A549 (cell line): ENCODE measurements at regions of chr15 and their contacts with region 1.

Region 1: DNA sequence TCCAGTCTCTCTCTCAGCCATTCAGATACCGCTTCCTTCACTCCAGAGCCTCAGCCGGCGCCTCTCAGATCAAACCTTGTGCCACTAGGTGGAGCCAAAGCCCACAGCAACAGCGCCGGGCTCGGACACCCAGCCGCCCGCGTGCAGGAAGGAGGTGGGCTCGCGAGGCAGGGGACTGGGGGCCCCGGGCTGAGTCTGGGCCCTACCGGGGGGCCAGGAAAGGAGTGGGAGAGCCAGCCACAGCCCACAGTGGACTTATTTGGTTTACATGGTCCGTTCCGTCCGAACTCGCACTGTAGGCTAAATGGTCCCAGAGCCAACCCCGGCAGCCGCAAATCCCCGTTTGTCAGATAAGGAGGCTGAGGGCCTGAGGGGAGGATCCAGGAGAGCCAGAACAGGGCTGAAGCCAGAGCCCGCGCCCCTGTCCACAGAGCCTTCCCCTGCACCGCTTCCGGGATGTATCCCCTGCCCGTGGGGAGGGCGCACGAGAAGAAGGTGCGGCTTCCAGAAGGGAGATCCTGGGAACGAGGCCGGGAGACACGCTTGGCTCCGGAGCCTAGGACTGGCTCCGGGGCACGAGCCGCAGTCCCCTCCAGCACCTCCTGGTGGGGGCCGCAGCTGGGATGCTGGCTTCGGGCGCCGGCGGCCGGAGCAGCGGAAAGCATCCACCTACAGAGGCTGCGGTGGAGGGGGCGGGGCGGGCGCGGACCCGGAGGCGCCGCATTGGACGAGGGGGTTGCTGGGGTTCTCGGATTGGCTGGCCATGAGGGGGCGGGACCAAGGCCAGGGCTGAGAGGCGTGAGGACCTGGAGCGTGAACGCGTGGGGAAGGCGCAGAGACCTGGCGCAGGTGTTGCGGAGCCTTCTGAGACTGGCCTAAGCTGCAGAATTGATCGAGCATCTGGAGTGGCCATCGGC is 6.5 kb upstream of the CYP11A1 start:
- DNase-seq: peak; percentile 81 to 96
- ATAC-seq: peak; percentile 92 to 97
- H3K4me3 ChIP-seq: peak overlapping the region; percentile 44
- H3K27ac ChIP-seq: peak overlapping the region; percentile 51 to 89
- H3K4me1 ChIP-seq: peaks cover 7% of the 10 kb centered on the region
- CTCF ChIP-seq: peak; percentile 79
- EP300 ChIP-seq: no peak
- POLR2A ChIP-seq: no peak
- RAD21 ChIP-seq: peak; percentile 86 to 89

Region 2: DNA sequence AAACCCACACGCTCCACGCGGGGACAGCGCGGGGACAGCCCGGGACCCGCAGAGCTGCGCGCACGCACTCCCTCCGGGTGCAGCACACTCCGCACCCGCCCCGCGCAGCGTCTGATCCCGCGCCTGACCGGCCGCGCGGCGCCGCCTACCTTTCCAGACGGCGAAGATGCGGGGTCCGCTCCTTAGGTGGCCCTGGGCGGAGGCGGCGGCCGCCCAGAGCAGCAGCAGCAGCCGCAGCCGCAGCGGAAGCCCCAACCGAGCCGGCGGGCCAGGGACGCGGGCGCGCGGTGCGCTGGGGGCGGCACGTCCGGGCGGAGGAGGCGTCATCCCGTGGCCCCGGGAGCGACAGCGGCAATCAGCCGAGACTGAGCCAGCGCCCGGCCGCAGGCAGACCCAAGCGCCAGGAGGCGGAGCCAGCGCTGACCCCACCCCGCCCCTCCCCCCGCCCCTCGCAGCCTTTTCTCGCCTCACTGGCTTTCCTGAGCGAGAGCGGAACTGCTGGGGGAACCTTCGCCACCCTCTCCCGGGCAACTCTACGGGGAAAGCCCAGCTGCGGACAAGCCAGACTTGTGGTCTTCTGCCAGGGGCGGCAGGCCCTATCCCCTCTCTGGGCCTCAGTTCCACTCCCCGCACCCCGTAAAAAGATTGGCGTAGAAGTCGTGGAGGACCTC is 59.7 kb after region 1 on chr15 and contains the start of gene SEMA7A:
- CTCF ChIA-PET with region 1: interaction called, 681 read pairs
- POLR2A ChIA-PET with region 1: no interaction called
- DNase-seq: peak; percentile 32 to 81
- ATAC-seq: peak; percentile 77 to 80
- H3K4me3 ChIP-seq: peak within 1 kb of the TSS; percentile 73
- H3K27ac ChIP-seq: peak within 1 kb of the TSS; percentile 60 to 89
- H3K4me1 ChIP-seq: peaks cover 10% of the 10 kb centered on the region; the same call in 2 of the 3 replicates
- CTCF ChIP-seq: no peak
- EP300 ChIP-seq: no peak
- POLR2A ChIP-seq: peak; percentile 56; the same call in 1 of the 2 replicates
- RAD21 ChIP-seq: no peak
- polyA plus RNA-seq, gene SEMA7A: 0.44 and 0.63 TPM in 2 replicates